ENCODE measurements at regions of chr11 and their contacts with region 1.

Region 1: GRCh38 chr11:132496341-132496740 is 1036.0 kb downstream of the OPCML start:
- DNase-seq: no peak
- ATAC-seq: no peak
- H3K4me3 ChIP-seq: no peak overlapping the region
- H3K27ac ChIP-seq: no peak overlapping the region
- H3K4me1 ChIP-seq: no peaks in the 10 kb centered on the region
- H3K27me3 ChIP-seq: no peaks in the 10 kb centered on the region
- CTCF ChIP-seq: no peak

Region 2: DNA sequence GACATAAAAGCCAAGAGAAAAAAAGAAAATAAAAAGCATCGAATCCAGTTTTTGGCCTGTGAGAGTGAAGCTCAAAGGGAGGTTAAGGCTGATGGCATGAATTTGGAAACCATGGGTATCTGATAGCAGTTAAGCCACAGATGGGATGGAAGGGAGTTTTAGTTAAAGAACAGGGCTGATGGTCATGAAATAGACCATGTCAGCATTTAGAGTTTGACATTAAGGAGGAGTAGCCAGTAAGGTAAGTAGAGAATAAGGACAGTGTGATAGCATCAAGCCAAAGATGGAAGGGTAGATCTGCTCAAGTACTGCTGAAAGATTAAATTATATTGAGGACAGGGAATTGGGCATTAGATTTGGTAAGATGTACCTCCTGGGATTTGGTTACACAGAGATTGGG is 299.4 kb before region 1 on chr11:
- intact Hi-C with region 1: loop called in 1 of 10 experiments (anchors 10 kb)
- DNase-seq: no peak
- ATAC-seq: no peak
- H3K4me3 ChIP-seq: no peak overlapping the region
- H3K27ac ChIP-seq: no peak overlapping the region
- H3K4me1 ChIP-seq: no peaks in the 10 kb centered on the region
- H3K27me3 ChIP-seq: peaks cover 0 to 13% (median 0%) of the 10 kb centered on the region in 7 donors
- CTCF ChIP-seq: no peak

Region 3: DNA sequence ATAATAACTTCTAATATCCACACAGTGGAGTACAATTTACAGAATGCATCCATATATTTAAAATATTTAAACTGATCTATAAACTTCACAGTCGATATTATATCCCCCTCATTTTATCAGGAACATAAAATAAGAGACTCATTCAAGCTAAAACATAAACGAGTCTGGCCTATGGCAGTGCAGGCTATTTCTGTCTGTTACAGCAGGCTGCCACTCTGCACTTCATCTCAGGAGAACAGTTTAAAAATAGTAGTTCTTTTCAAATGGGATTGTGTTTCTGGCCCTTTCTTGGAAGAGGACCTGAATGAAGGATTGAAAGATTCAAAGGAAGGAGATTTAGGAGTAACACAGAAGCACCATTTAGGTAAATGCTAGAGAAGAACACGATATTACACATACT is 210.2 kb before region 1 on chr11:
- intact Hi-C with region 1: no loop called
- DNase-seq: no peak
- ATAC-seq: peak in 6 of 8 donors; percentile 46 to 87 (median 66)
- H3K4me3 ChIP-seq: no peak overlapping the region
- H3K27ac ChIP-seq: peak overlapping the region in 5 of 10 donors; percentile 11 to 59 (median 33)
- H3K4me1 ChIP-seq: peaks cover 0 to 20% (median 10%) of the 10 kb centered on the region in 9 donors
- H3K27me3 ChIP-seq: no peaks in the 10 kb centered on the region
- CTCF ChIP-seq: no peak

Region 4: DNA sequence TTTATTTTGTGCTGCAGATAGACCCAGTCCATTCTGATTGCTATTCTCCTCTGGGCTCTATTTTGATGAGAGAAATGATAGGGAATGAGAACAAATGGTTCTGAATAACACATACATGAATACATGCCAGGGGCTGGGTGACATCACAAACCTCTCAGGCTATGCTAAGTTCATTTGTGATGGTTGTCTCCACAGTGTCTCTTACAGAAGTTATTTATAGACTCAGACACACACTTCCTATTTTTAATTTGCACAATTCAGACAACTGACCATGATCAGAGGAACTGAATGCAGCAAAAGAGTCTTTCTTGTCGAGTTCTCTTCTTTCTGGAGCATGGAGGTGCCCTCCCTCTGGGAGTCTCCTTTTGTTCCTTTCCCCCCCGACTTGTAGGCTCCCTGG is 44.2 kb after region 1 on chr11:
- intact Hi-C with region 1: loop called in 1 of 10 experiments (anchors 10 kb)
- DNase-seq: no peak
- ATAC-seq: peak in 2 of 8 donors; percentile 60 to 67
- H3K4me3 ChIP-seq: no peak overlapping the region
- H3K27ac ChIP-seq: no peak overlapping the region
- H3K4me1 ChIP-seq: peaks cover 0 to 7% (median 0%) of the 10 kb centered on the region in 9 donors
- H3K27me3 ChIP-seq: no peaks in the 10 kb centered on the region
- CTCF ChIP-seq: no peak